ENCODE measurements at regions of chr1 and their contacts with region 1.

Region 1: GRCh38 chr1:66446261-66447001 is 87.5 kb upstream of the SGIP1 start:
- DNase-seq: no peak
- H3K4me3 ChIP-seq: no peak overlapping the region
- H3K27ac ChIP-seq: peak overlapping the region in 1 of 4 donors; percentile 42
- H3K4me1 ChIP-seq: peaks cover 21 to 42% (median 29%) of the 10 kb centered on the region in 4 donors
- H3K27me3 ChIP-seq: no peaks in the 10 kb centered on the region
- CTCF ChIP-seq: peak; percentile 83 to 91 (median 89)
- EP300 ChIP-seq: no peak
- POLR2A ChIP-seq: no peak

Region 2: GRCh38 chr1:65958561-65959350 is 487.7 kb before region 1 on chr1:
- intact Hi-C with region 1: loop called (anchors 5 kb)
- DNase-seq: no peak
- H3K4me3 ChIP-seq: no peak overlapping the region
- H3K27ac ChIP-seq: no peak overlapping the region
- H3K4me1 ChIP-seq: no peaks in the 10 kb centered on the region
- H3K27me3 ChIP-seq: no peaks in the 10 kb centered on the region
- CTCF ChIP-seq: peak; percentile 60 to 75 (median 68)
- EP300 ChIP-seq: no peak
- POLR2A ChIP-seq: no peak

Region 3: GRCh38 chr1:66253330-66253921 is 193.0 kb before region 1 on chr1:
- intact Hi-C with region 1: loop called (anchors 1 kb)
- DNase-seq: no peak
- H3K4me3 ChIP-seq: no peak overlapping the region
- H3K27ac ChIP-seq: no peak overlapping the region
- H3K4me1 ChIP-seq: peaks cover 0 to 4% (median 0%) of the 10 kb centered on the region in 4 donors
- H3K27me3 ChIP-seq: no peaks in the 10 kb centered on the region
- CTCF ChIP-seq: peak; percentile 70 to 78 (median 76)
- EP300 ChIP-seq: no peak
- POLR2A ChIP-seq: no peak

Region 4: DNA sequence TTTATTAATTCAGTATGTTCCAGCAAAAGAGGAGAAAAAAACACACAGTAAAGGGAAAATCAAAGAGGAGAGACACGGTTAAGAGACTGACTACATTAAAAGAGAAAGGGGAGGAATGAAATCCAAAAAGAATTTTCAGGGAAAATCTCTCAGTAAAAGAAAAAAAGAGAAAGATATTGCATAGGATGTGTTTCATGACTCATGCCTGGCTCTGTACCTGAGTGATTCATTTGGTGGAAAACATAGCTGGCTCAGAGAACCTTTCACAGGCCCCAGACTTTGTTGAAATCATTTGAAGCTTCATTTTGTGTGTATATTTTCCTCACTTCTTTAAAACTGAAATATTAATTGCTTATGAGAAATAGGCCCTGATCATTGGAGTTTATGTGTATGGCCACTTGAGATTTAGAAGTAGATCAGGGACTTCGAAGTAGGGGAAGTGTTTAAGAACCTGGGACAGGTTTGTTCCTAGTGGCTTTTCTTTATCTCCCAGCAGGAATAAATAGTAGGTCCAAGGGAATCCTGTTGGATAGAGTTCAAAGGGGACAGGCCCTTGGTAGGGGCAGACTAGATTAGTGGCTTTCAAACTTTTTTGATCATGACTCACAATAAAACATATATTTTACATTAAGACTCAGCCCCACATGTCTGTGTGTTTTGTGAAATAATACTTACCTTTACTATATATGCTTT is 151.6 kb before region 1 on chr1:
- intact Hi-C with region 1: no loop called
- DNase-seq: no peak
- H3K4me3 ChIP-seq: no peak overlapping the region
- H3K27ac ChIP-seq: peak overlapping the region in 3 of 4 donors; percentile 38 to 52 (median 47)
- H3K4me1 ChIP-seq: peaks cover 0 to 8% (median 0%) of the 10 kb centered on the region in 4 donors
- H3K27me3 ChIP-seq: no peaks in the 10 kb centered on the region
- CTCF ChIP-seq: no peak
- EP300 ChIP-seq: no peak
- POLR2A ChIP-seq: no peak

Region 5: DNA sequence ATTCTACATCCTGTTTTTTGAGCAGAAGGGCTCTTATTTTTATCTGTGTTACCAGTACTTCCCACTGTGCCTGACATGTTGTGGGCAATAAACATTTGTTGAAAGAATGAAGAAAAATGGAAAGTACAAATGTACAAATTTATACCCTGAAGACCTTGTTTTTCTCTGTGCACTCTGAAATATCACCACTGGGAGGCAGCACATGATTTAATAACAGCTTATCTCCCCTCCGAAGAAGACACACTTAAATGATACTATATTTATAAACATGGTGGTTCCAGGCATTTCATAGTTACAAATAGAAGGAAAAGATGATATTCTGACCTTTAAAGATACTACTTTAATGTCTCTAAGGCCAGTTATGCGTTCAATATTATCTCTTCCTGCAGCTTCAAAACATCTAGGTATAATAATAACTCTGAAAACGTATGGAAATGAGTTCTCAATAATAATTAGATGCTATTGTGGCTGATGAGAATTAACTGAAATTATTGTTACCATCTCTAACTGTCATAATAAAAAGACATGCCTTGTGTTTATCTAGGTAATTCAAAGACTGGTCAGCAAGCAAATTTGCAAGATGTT is 318.7 kb after region 1 on chr1:
- intact Hi-C with region 1: no loop called
- DNase-seq: no peak
- H3K4me3 ChIP-seq: no peak overlapping the region
- H3K27ac ChIP-seq: no peak overlapping the region
- H3K4me1 ChIP-seq: peaks cover 0 to 3% (median 0%) of the 10 kb centered on the region in 4 donors
- H3K27me3 ChIP-seq: no peaks in the 10 kb centered on the region
- CTCF ChIP-seq: peak; percentile 69 to 77 (median 72)
- EP300 ChIP-seq: no peak
- POLR2A ChIP-seq: no peak